Breast epithelium (tissue), 4 donors: ENCODE measurements at regions of chr21 and their contacts with region 1.

Region 1: DNA sequence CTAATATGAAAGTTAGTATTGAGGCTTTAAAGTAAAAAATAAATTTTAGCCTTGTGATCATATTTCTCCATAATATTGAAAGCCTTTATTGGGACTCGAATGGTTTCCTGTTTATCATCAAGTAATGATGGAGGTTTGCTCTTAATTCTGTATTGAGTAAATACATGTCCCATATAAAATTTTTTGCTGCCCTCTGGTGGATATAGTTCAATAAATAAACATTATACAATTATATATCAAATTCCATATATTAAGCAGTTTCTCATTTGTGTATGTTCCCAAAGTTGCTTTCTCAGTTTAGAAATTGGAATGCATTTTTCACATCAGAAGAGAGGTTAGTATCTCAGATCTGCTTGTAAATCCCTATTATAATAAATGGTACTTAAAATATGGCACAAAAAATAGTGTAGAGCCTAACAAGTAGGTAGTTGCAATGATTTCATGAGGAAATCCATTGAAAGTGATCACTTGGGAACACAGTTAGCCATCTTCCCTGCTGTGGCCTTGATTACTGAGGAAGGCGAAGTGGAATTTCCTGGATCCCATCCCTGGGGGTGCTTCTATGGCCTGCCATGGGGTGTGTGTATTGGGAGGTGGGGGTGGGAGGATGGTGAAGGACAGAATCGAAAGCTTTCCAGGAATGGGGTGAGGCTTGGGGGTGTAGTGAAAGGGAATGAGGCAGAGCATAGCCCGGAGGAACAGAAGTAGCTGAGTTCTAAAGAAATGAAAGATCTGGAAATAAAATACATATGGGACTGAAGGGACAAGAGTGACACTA is 84.1 kb upstream of the C21orf91 start:
- DNase-seq: no peak
- H3K4me3 ChIP-seq: no peak overlapping the region
- H3K27ac ChIP-seq: no peak overlapping the region
- H3K4me1 ChIP-seq: no peaks in the 10 kb centered on the region
- H3K27me3 ChIP-seq: no peaks in the 10 kb centered on the region
- CTCF ChIP-seq: peak; percentile 6 to 29 (median 14)
- POLR2A ChIP-seq: no peak

Region 2: GRCh38 chr21:17841103-17841502 is 62.1 kb before region 1 on chr21:
- intact Hi-C with region 1: no loop called
- DNase-seq: no peak
- H3K4me3 ChIP-seq: no peak overlapping the region
- H3K27ac ChIP-seq: no peak overlapping the region
- H3K4me1 ChIP-seq: no peaks in the 10 kb centered on the region
- H3K27me3 ChIP-seq: no peaks in the 10 kb centered on the region
- CTCF ChIP-seq: no peak
- POLR2A ChIP-seq: no peak

Region 3: DNA sequence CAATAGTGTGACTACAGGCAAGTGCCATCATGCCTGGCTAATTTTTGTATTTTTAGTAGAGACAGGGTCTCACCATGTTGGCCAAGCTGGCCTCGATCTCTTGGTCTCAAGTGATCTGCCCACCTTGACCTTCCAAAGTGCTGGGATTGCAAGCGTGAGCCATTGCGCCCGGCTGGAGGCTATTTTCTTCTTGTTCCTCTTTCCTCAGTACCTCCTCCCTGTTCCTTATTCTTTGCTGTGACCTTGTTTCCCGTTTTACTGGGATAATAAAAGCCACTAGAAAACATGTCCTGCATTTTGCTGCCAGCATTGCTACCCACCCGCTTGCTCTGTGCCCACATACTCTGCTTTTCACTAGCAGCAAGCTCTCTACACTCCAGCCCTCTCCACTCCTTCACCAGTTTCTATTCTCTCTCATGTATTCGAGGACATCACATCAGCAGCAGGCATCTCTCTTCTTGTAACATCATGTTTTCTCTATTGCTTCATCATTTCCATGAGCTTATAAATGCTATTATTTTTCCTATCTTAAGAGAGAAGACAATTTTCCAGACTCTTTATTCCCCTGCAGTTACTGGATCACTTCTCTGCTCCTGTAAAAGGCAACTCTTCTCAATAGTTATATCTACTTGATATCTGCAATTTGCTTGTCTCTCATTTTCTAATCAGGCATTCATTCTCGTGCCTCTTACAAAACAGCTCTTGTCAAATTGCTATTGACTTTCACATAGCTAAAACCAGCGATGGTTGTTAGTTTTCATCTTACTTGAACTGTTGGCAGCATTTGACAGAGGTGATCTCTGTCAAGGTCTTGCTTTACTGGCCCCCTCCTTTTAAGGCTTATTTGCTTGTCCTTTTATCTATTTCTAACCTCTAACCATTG is 49.6 kb before region 1 on chr21:
- intact Hi-C with region 1: loop called (anchors 2 kb)
- DNase-seq: no peak
- H3K4me3 ChIP-seq: no peak overlapping the region
- H3K27ac ChIP-seq: no peak overlapping the region
- H3K4me1 ChIP-seq: no peaks in the 10 kb centered on the region
- H3K27me3 ChIP-seq: no peaks in the 10 kb centered on the region
- CTCF ChIP-seq: no peak
- POLR2A ChIP-seq: no peak